MCF 10A (cell line): ENCODE measurements at regions of chr3 and their contacts with region 1.

Region 1: GRCh38 chr3:168095611-168096209 is at the start of gene GOLIM4:
- DNase-seq: peak; percentile 98
- H3K4me3 Mint-ChIP-seq: peak within 1 kb of the TSS; percentile 80
- H3K27ac Mint-ChIP-seq: peak within 1 kb of the TSS; percentile 85
- H3K4me1 Mint-ChIP-seq: peaks cover 24% of the 10 kb centered on the region
- H3K27me3 Mint-ChIP-seq: no peaks in the 10 kb centered on the region
- CTCF ChIP-seq: no peak
- total RNA-seq, gene GOLIM4: 21.5 and 25.8 TPM in 2 replicates

Region 2: GRCh38 chr3:167734498-167735232 is 361.0 kb before region 1 on chr3 and contains the start of gene PDCD10:
- CTCF ChIA-PET with region 1: no interaction called
- POLR2A ChIA-PET with region 1: interaction called, 12 read pairs
- intact Hi-C with region 1: no loop called
- DNase-seq: peak; percentile 100
- H3K4me3 Mint-ChIP-seq: no peak within 1 kb of the TSS
- H3K27ac Mint-ChIP-seq: no peak within 1 kb of the TSS
- H3K4me1 Mint-ChIP-seq: peaks cover 22% of the 10 kb centered on the region
- H3K27me3 Mint-ChIP-seq: no peaks in the 10 kb centered on the region
- CTCF ChIP-seq: no peak
- total RNA-seq, gene PDCD10: 62.9 and 63.3 TPM in 2 replicates

Region 3: DNA sequence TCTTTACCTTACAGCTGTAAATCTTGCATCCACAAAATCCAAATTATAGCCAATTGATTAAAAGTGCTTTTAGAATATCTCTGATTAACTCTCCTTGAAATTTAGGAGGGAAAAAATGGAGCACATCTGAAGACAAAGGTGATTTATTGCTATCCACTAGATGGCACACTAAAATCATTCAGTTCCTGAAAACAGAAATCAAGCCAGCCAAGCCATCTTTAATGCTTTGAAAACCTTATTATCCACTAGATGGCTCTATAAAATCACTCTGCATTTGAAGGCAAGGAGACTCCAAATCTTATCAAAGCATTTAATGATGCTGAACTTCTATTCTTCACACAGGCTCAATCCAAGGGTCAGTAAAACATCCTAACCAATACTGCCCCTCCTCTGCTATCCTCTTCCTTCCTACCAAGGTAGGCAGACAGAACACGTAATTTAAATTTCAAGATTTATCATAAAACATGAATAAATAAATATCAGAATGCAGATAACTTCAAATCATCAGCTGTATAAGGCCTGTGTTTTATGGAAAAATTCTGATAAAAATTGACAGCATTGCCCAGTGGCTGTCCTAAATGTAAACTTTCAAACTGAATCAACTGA is 48.4 kb before region 1 on chr3:
- CTCF ChIA-PET with region 1: interaction called, 78 read pairs
- POLR2A ChIA-PET with region 1: interaction called, 5 read pairs
- intact Hi-C with region 1: loop called (anchors 1 kb)
- DNase-seq: peak; percentile 81
- H3K4me3 Mint-ChIP-seq: no peak overlapping the region
- H3K27ac Mint-ChIP-seq: no peak overlapping the region
- H3K4me1 Mint-ChIP-seq: peaks cover 15% of the 10 kb centered on the region
- H3K27me3 Mint-ChIP-seq: no peaks in the 10 kb centered on the region
- CTCF ChIP-seq: peak; percentile 85

Region 4: DNA sequence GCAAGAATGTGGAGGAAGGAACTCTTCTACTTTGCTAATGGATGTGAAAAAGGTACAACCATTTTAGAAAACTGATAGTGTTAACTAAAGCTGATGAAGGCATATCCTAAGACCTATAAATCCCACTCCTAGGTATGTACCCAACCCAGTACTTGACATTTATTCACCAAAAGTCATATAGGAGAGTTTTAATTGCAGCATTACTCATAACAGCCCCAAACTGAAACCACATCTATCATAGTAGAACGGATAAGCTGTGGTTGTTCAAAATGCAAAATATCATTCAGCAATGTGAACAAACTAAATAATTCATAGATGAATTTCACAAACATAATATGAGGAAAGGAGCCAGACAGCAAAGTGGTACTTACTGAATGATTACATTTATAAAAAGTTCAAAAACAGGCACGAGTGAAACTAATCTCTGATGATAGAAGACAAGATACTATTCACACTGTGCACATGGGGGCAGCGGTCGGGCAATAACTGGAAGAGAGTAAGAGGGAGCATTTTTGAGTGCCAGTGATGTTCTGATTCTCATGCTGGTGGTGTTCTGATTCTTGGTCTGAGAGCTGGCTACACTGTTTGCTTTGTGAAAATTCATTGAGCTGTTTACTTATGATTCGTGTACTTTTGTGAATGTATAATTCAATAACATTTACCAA is 34.2 kb before region 1 on chr3:
- CTCF ChIA-PET with region 1: interaction called, 17 read pairs
- POLR2A ChIA-PET with region 1: interaction called, 19 read pairs
- intact Hi-C with region 1: no loop called
- DNase-seq: no peak
- H3K4me3 Mint-ChIP-seq: no peak overlapping the region
- H3K27ac Mint-ChIP-seq: no peak overlapping the region
- H3K4me1 Mint-ChIP-seq: peaks cover 20% of the 10 kb centered on the region
- H3K27me3 Mint-ChIP-seq: no peaks in the 10 kb centered on the region
- CTCF ChIP-seq: no peak

Region 5: DNA sequence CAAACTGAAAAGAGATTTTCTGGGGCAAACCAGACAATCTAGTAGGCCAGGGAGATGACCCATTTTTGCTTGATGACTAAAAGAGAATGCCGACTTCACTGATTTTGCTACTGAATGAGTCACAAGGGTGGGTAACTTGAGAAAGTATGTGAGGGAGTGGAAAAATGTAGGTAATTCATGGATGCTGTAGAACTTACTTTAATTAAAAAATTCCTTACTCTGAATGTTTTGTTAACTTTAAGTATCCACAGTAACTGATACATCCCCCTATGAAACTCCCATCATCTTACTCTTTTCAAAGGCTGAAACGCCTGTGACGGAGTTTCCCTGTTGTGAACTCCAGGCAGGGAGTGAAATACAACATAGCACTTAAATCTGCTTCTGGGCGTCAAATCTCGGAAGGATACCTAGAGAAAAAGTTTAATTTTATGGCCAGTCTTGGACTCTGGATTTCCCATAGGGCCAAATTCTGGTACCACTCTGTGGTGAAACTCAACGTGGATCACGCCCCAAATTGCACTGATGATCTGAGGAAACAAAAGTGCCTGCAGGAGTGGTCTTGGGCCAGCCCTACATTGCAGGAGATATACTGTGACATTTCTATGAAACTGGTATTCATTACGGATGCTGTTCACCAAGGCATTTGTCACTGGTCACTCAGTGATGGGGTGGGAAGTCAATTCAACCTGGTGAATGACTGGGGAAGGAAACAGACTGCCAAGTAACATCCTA is 24.0 kb before region 1 on chr3:
- CTCF ChIA-PET with region 1: interaction called, 4 read pairs
- POLR2A ChIA-PET with region 1: interaction called, 32 read pairs
- intact Hi-C with region 1: loop called (anchors 2 kb)
- DNase-seq: peak; percentile 75
- H3K4me3 Mint-ChIP-seq: no peak overlapping the region
- H3K27ac Mint-ChIP-seq: peak overlapping the region; percentile 92
- H3K4me1 Mint-ChIP-seq: peaks cover 18% of the 10 kb centered on the region
- H3K27me3 Mint-ChIP-seq: no peaks in the 10 kb centered on the region
- CTCF ChIP-seq: no peak

Region 6: DNA sequence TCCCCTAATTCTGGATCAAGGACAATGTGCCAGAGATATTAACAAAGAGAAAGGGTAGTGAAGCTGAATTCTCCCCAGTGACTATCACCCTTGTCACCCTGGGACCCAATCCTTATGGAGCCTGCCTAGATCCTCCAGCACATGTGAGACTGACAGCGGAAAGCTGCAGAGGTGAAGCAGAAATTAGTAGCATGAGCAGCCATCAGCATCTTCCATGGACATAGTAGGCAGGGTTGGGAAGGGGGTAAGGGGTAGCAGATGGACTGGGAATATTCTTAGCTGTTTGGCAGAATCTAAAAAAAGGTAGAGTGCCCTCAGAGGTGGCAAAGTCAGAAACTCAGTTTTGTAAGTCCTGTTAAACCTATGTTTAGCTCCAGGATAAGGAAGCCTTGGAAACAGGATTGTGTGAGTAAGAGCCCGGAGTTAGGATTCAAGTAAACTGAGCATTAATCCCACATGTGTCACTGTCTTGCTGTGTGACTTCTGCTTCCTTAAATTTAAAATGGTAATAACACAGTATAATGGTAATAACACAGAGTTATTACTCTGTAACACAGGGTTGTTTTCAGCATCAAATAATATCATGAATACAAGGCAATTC is 14.4 kb before region 1 on chr3:
- CTCF ChIA-PET with region 1: interaction called, 6 read pairs
- POLR2A ChIA-PET with region 1: interaction called, 39 read pairs
- intact Hi-C with region 1: no loop called
- DNase-seq: no peak
- H3K4me3 Mint-ChIP-seq: no peak overlapping the region
- H3K27ac Mint-ChIP-seq: no peak overlapping the region
- H3K4me1 Mint-ChIP-seq: peaks cover 10% of the 10 kb centered on the region
- H3K27me3 Mint-ChIP-seq: no peaks in the 10 kb centered on the region
- CTCF ChIP-seq: no peak

Region 7: DNA sequence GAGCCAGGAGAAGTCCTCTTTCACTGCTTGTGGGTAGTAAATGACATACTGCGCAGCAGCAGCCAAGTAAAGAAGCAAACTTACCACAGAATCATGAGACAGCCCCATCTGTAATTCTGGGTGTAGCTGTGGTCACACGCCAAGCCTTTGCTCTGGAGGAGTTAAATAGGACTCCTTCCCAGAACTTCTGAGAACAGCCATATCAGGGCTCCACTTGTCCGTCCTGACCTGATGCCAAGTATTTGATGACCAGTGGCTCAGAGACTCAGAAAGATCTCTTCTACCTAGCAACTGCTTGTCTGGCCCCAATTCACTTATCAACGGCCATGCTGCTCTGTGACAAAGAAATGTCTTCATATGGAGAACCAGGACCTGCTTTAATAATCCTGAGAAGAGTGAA is 20.6 kb after region 1 on chr3:
- CTCF ChIA-PET with region 1: interaction called, 5 read pairs
- POLR2A ChIA-PET with region 1: interaction called, 31 read pairs
- intact Hi-C with region 1: no loop called
- DNase-seq: no peak
- H3K4me3 Mint-ChIP-seq: no peak overlapping the region
- H3K27ac Mint-ChIP-seq: no peak overlapping the region
- H3K4me1 Mint-ChIP-seq: peaks cover 13% of the 10 kb centered on the region
- H3K27me3 Mint-ChIP-seq: no peaks in the 10 kb centered on the region
- CTCF ChIP-seq: no peak